ENCODE measurements at regions of chr12 and their contacts with region 1.

Region 1: DNA sequence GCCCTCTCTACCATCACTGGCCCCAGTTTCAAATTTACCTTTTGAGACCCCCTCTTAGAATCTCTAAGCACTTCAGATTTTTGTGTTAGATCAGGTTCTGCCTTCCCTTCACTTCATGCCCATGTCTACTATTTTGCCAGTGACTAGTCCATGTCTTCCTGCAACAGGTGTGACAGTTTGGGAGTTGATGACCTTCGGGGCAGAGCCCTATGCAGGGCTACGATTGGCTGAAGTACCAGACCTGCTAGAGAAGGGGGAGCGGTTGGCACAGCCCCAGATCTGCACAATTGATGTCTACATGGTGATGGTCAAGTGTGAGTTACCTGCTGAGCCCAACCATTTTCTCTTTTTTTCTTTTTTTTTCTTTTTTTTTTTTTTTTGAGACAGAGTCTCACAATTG is 5.8 kb upstream of the PA2G4 start:
- DNase-seq: no peak
- ATAC-seq: no peak
- H3K4me3 ChIP-seq: no peak overlapping the region
- H3K27ac ChIP-seq: no peak overlapping the region
- H3K4me1 ChIP-seq: peaks cover 0 to 14% (median 6%) of the 10 kb centered on the region in 9 donors
- H3K27me3 ChIP-seq: no peaks in the 10 kb centered on the region
- CTCF ChIP-seq: no peak

Region 2: GRCh38 chr12:56020423-56021184 is 78.0 kb before region 1 on chr12 and contains the start of gene IKZF4:
- intact Hi-C with region 1: no loop called
- DNase-seq: peak; percentile 21 to 22
- ATAC-seq: peak; percentile 35 to 65 (median 60)
- H3K4me3 ChIP-seq: peak within 1 kb of the TSS in 7 of 10 donors; percentile 18 to 40 (median 30)
- H3K27ac ChIP-seq: peak within 1 kb of the TSS in 9 of 10 donors; percentile 5 to 70 (median 52)
- H3K4me1 ChIP-seq: peaks cover 0 to 17% (median 9%) of the 10 kb centered on the region in 9 donors
- H3K27me3 ChIP-seq: no peaks in the 10 kb centered on the region
- CTCF ChIP-seq: no peak
- total RNA-seq, gene IKZF4: 5.2 to 10.1 (median 7.3) TPM

Region 3: GRCh38 chr12:56062996-56063395 is 35.6 kb before region 1 on chr12:
- intact Hi-C with region 1: loop called in 1 of 10 experiments (anchors 5 kb)
- DNase-seq: no peak
- ATAC-seq: no peak
- H3K4me3 ChIP-seq: no peak overlapping the region
- H3K27ac ChIP-seq: no peak overlapping the region
- H3K4me1 ChIP-seq: no peaks in the 10 kb centered on the region
- H3K27me3 ChIP-seq: no peaks in the 10 kb centered on the region
- CTCF ChIP-seq: no peak

Measured in heart right ventricle (tissue), 16 donors.